B cell (primary cell): ENCODE measurements at regions of chr17 and their contacts with region 1.

Region 1: GRCh38 chr17:50129728-50130558 is at the start of gene SAMD14:
- DNase-seq: peak; percentile 69
- ATAC-seq: peak; percentile 61
- H3K4me3 ChIP-seq: peak within 1 kb of the TSS in 4 of 5 experiments; percentile 49 to 69 (median 57)
- H3K4me3 Mint-ChIP-seq: peak within 1 kb of the TSS; percentile 83
- H3K27ac ChIP-seq: no peak within 1 kb of the TSS
- H3K27ac Mint-ChIP-seq: peak within 1 kb of the TSS; percentile 83
- H3K4me1 ChIP-seq: peaks cover 27 to 35% of the 10 kb centered on the region in 2 donors
- H3K4me1 Mint-ChIP-seq: peaks cover 34% of the 10 kb centered on the region
- H3K27me3 ChIP-seq: peaks cover 0 to 28% (median 9%) of the 10 kb centered on the region in 4 experiments
- H3K27me3 Mint-ChIP-seq: peaks cover 10% of the 10 kb centered on the region
- CTCF ChIP-seq: no peak
- total RNA-seq, gene SAMD14: 0.78 and 0.89 TPM in 2 replicates

Region 2: GRCh38 chr17:50114849-50115357 is 15.0 kb before region 1 on chr17:
- CTCF ChIA-PET with region 1: interaction called, 8 read pairs
- POLR2A ChIA-PET with region 1: interaction called, 19 read pairs
- intact Hi-C with region 1: no loop called
- DNase-seq: peak; percentile 66
- ATAC-seq: peak; percentile 20
- H3K4me3 ChIP-seq: no peak overlapping the region
- H3K4me3 Mint-ChIP-seq: peak overlapping the region; percentile 48
- H3K27ac ChIP-seq: no peak overlapping the region
- H3K27ac Mint-ChIP-seq: no peak overlapping the region
- H3K4me1 ChIP-seq: peaks cover 10 to 20% of the 10 kb centered on the region in 2 donors
- H3K4me1 Mint-ChIP-seq: peaks cover 14% of the 10 kb centered on the region
- H3K27me3 ChIP-seq: peaks cover 0 to 46% (median 16%) of the 10 kb centered on the region in 4 experiments
- H3K27me3 Mint-ChIP-seq: peaks cover 45% of the 10 kb centered on the region
- CTCF ChIP-seq: peak; percentile 72

Region 3: GRCh38 chr17:50151041-50151936 is 21.3 kb after region 1 on chr17:
- CTCF ChIA-PET with region 1: interaction called, 16 read pairs
- POLR2A ChIA-PET with region 1: interaction called, 4 read pairs
- intact Hi-C with region 1: no loop called
- DNase-seq: peak; percentile 90
- ATAC-seq: peak; percentile 48
- H3K4me3 ChIP-seq: peak overlapping the region; percentile 70 to 97 (median 85)
- H3K4me3 Mint-ChIP-seq: peak overlapping the region; percentile 95
- H3K27ac ChIP-seq: peak overlapping the region; percentile 48 to 75
- H3K27ac Mint-ChIP-seq: peak overlapping the region; percentile 94
- H3K4me1 ChIP-seq: peaks cover 17 to 46% of the 10 kb centered on the region in 2 donors
- H3K4me1 Mint-ChIP-seq: peaks cover 37% of the 10 kb centered on the region
- H3K27me3 ChIP-seq: no peaks in the 10 kb centered on the region
- H3K27me3 Mint-ChIP-seq: no peaks in the 10 kb centered on the region
- CTCF ChIP-seq: peak; percentile 60